Ovary (tissue), 10 donors: ENCODE measurements at regions of chr10 and their contacts with region 1.

Region 1: DNA sequence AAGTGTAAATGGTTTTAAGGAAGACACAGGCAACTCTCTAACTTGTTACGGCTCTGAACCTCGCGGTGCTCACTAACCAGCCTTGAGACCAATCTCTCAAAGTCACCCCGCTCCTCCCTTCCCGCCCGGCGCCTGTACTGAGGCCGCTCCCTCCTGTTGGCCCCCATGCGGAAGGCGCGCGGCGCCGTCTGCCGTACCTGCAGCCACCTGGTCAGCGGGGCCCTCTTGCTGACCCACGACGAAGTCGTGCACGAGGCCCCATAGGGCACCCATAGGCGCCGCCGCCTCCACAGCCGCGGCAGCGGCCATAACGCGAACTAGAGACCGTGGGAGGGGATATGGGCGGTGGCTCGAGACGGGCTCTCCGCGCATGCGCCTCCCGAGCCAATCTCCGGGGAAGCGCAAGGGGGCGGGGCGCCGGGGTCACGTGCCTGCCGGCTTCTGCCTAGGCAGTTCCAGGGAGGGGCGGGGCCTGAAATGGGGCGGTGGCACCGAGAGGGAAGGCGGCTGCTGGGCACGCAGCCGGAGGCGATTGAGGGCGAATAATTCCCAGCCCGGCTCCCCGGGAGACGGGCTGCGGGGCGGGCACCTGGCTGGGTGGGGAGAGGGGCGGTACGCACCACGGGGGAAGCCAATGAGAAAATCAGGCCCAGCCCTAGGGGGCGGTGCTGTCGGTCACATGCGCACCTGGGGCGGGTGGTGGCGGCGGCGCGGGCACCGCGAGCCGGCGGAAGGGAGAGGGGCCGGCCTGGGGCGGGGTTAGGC is at the start of gene MMS19:
- DNase-seq: peak; percentile 100
- H3K4me3 ChIP-seq: peak within 1 kb of the TSS; percentile 76
- H3K27ac ChIP-seq: peak within 1 kb of the TSS; percentile 73 to 84
- H3K4me1 ChIP-seq: peaks cover 4% of the 10 kb centered on the region
- H3K27me3 ChIP-seq: no peaks in the 10 kb centered on the region
- CTCF ChIP-seq: peak in 1 of 3 donors; percentile 23
- EP300 ChIP-seq: peak; percentile 48
- POLR2A ChIP-seq: peak; percentile 57
- total RNA-seq, gene MMS19: 54.2 to 63.6 (median 56.4) TPM

Region 2: GRCh38 chr10:97543025-97543575 is 44.8 kb after region 1 on chr10:
- intact Hi-C with region 1: loop called in 3 of 4 experiments (anchors 2 to 10 kb)
- DNase-seq: peak; percentile 71 to 83 (median 74)
- H3K4me3 ChIP-seq: no peak overlapping the region
- H3K27ac ChIP-seq: peak overlapping the region; percentile 75 to 79
- H3K4me1 ChIP-seq: peaks cover 23% of the 10 kb centered on the region
- H3K27me3 ChIP-seq: no peaks in the 10 kb centered on the region
- CTCF ChIP-seq: no peak
- EP300 ChIP-seq: no peak
- POLR2A ChIP-seq: no peak

Region 3: GRCh38 chr10:97596101-97597062 is 98.1 kb after region 1 on chr10:
- intact Hi-C with region 1: no loop called
- DNase-seq: peak in 2 of 5 donors; percentile 32 to 58
- H3K4me3 ChIP-seq: no peak overlapping the region
- H3K27ac ChIP-seq: no peak overlapping the region
- H3K4me1 ChIP-seq: peaks cover 2% of the 10 kb centered on the region
- H3K27me3 ChIP-seq: no peaks in the 10 kb centered on the region
- CTCF ChIP-seq: no peak
- EP300 ChIP-seq: peak; percentile 72
- POLR2A ChIP-seq: no peak